ENCODE measurements at regions of chr9 and their contacts with region 1.

Region 1: DNA sequence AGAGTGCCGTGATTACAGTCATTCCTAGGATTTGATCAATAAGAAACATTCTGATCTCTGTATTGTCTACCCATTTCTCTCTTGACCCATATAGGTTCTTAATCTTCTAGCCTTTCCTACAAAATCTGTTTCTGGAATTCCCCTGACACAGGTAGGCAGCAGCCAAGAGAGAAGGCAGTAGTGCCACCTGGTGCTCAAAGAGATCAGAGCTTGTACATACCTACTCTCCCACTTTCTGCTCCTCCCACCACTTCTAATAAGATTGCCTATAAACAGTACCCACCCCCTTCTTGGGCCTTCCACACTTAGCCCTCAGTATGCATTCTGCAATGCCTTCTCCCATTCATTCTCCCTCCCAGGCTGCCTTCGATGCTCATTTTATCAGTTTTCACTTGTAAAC is 117.4 kb upstream of the RORB start:
- DNase-seq: no peak
- ATAC-seq: no peak
- H3K4me3 ChIP-seq: no peak overlapping the region
- H3K27ac ChIP-seq: no peak overlapping the region
- H3K4me1 ChIP-seq: no peaks in the 10 kb centered on the region
- H3K27me3 ChIP-seq: no peaks in the 10 kb centered on the region
- CTCF ChIP-seq: no peak
- POLR2A ChIP-seq: no peak

Region 2: DNA sequence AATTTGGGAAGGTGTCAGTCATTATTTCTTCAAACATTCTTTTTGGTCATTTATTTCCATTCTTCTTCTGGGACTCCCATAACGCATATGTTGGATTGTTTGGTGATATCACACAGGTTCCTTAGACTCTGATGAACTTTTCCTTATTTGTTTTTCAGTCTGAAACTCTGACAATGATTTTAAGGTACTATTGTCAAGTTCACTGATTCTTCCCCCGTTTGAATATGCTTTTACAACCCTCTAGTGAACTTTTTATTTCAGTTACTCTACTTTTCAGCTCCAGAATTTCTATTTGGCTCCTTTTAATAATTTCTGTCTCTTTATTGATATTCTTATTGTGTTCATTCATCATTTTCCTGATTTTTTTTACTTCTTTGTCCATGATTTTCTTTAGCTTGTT is 24.9 kb after region 1 on chr9:
- in situ Hi-C with region 1: no loop called
- intact Hi-C with region 1: loop called (anchors 2 kb)
- DNase-seq: no peak
- ATAC-seq: no peak
- H3K4me3 ChIP-seq: no peak overlapping the region
- H3K27ac ChIP-seq: no peak overlapping the region
- H3K4me1 ChIP-seq: no peaks in the 10 kb centered on the region
- H3K27me3 ChIP-seq: no peaks in the 10 kb centered on the region
- CTCF ChIP-seq: no peak
- POLR2A ChIP-seq: no peak